Naive thymus-derived CD4-positive, alpha-beta T cell (primary cell): ENCODE measurements at regions of chrX and their contacts with region 1.

Region 1: GRCh38 chrX:103464774-103465117 is 54.5 kb downstream of the RAB40A start:
- DNase-seq: peak; percentile 29 to 82 (median 72)
- ATAC-seq: peak; percentile 98
- H3K4me3 ChIP-seq: peak overlapping the region; percentile 70
- H3K4me3 Mint-ChIP-seq: peak overlapping the region; percentile 92 to 98 (median 94)
- H3K27ac ChIP-seq: peak overlapping the region; percentile 57
- H3K27ac Mint-ChIP-seq: peak overlapping the region; percentile 7 to 95 (median 91)
- H3K4me1 ChIP-seq: peaks cover 0 to 4% of the 10 kb centered on the region in 2 donors
- H3K4me1 Mint-ChIP-seq: peaks cover 5 to 45% (median 23%) of the 10 kb centered on the region in 7 donors
- H3K27me3 ChIP-seq: no peaks in the 10 kb centered on the region
- H3K27me3 Mint-ChIP-seq: peaks cover 0 to 9% (median 0%) of the 10 kb centered on the region in 5 donors

Region 2: DNA sequence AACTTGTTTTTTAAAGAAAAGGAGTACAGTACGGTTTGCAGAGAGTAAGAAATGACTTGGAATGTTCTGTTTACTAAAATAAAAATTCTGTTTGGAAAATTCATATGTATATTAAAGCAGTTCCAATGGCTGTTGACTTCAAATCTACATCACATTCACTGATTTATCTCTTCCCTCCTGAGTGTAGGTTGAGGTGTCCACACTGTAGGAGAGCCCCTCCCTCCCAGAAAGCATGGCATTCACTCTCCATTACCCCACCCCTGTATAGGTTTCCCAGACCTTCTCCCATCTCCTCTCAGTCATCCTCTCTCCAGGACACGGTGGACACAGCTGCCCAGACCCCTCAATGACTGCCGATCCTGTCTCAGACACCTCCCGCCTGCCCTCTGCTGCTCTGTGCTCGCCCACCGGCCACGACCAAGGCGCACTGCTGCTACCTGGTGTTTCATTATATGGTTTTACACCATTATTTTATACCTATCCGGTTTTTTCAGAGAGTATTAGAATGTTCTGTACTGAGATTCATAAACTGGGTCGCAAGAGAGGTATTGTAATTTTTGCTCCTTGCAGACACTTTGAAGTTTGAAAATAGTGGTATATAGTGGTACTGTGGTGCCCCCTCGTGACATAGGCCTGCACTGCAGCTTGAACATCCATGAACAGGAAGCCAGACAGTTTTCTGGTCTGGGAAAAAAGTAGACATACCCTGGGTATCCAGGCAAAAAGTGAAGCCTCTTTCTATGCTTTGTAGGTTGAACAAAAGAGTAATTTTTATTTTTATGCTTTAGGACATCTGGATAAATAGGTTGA is 288.6 kb before region 1 on chrX:
- CTCF ChIA-PET with region 1: interaction called, 3 read pairs
- POLR2A ChIA-PET with region 1: no interaction called
- intact Hi-C with region 1: loop called in 1 of 2 experiments (anchors 1 kb)
- DNase-seq: peak; percentile 16 to 56 (median 43)
- ATAC-seq: peak; percentile 78
- H3K4me3 ChIP-seq: no peak overlapping the region
- H3K4me3 Mint-ChIP-seq: peak overlapping the region; percentile 7 to 71 (median 42)
- H3K27ac ChIP-seq: no peak overlapping the region
- H3K27ac Mint-ChIP-seq: no peak overlapping the region
- H3K4me1 ChIP-seq: no peaks in the 10 kb centered on the region
- H3K4me1 Mint-ChIP-seq: peaks cover 2 to 5% (median 4%) of the 10 kb centered on the region in 7 donors
- H3K27me3 ChIP-seq: no peaks in the 10 kb centered on the region
- H3K27me3 Mint-ChIP-seq: peaks cover 0 to 9% (median 6%) of the 10 kb centered on the region in 5 donors

Region 3: DNA sequence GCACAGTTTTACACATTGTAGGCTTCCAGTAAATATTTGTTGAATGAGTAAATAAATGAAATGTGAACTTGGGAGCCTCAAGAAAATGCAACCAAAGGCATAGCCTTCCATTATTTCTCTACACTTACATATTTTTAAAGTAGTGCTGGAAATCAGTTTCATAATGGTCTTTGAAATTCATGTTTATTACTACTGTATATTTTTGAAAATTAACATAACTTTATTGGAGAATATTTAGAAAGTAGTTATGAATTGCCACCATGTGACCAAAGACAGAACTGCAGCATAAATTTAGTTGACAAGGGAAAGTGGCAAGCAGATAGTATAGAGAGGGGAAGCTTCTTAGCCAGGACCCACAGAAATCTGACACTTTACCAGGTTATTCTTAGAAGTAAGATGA is 216.2 kb before region 1 on chrX:
- CTCF ChIA-PET with region 1: interaction called, 5 read pairs
- POLR2A ChIA-PET with region 1: interaction called, 3 read pairs
- intact Hi-C with region 1: loop called in 1 of 2 experiments (anchors 1 kb)
- DNase-seq: peak in 4 of 9 donors; percentile 8 to 27 (median 14)
- ATAC-seq: no peak
- H3K4me3 ChIP-seq: no peak overlapping the region
- H3K4me3 Mint-ChIP-seq: no peak overlapping the region
- H3K27ac ChIP-seq: no peak overlapping the region
- H3K27ac Mint-ChIP-seq: no peak overlapping the region
- H3K4me1 ChIP-seq: no peaks in the 10 kb centered on the region
- H3K4me1 Mint-ChIP-seq: peaks cover 3 to 16% (median 4%) of the 10 kb centered on the region in 7 donors
- H3K27me3 ChIP-seq: no peaks in the 10 kb centered on the region
- H3K27me3 Mint-ChIP-seq: peaks cover 0 to 12% (median 0%) of the 10 kb centered on the region in 5 donors

Region 4: DNA sequence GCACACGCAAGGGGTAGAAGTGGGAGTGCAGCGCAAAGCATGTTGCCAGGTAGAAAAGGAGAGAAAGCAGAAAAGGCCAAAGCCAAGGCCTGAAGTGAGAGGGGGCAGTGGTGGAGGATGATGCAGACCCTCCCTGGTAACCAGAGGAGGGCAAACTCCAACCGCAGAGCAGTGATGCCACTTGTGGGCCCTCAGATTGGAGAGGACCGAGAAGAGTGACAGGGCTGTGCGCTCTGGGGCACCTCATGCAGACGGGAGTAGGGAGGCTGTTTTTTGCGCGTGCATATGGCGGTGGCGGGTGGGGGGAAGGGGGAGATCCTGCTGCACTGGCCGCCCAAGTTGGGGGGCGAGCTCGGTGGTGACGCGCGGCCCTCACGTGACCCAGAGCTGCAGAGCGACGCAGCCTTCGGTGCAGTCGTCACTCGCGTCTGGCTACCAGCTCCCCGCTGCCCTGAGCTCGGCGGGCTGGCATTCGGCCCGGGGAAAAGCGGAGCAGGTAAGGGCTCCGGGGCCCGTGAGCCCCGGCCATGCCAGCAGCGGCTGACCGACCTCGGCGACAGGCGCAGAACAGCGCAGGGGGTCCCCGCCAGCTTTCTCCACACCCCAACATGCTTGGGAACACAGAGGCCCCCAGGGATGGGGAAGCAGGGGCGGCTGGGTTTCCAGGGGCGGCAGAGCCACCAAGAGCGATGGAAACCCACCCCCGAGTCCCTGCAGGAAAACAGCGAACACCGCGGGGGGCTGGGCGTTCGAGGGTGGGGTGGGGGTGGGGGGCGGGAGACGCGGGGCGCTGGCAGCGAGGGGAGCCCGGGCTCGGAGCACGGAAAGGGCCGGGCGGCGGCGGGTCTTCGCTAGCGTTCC is 88.4 kb before region 1 on chrX and contains the start of gene BEX3:
- CTCF ChIA-PET with region 1: interaction called, 9 read pairs
- POLR2A ChIA-PET with region 1: interaction called, 24 read pairs
- intact Hi-C with region 1: loop called in 1 of 2 experiments (anchors 1 kb)
- DNase-seq: peak in 8 of 9 donors; percentile 21 to 61 (median 50)
- ATAC-seq: peak; percentile 73
- H3K4me3 ChIP-seq: peak within 1 kb of the TSS; percentile 27
- H3K4me3 Mint-ChIP-seq: peak within 1 kb of the TSS; percentile 74 to 91 (median 84)
- H3K27ac ChIP-seq: peak within 1 kb of the TSS; percentile 73
- H3K27ac Mint-ChIP-seq: peak within 1 kb of the TSS in 8 of 9 donors; percentile 64 to 89 (median 76)
- H3K4me1 ChIP-seq: no peaks in the 10 kb centered on the region
- H3K4me1 Mint-ChIP-seq: peaks cover 3 to 14% (median 7%) of the 10 kb centered on the region in 7 donors
- H3K27me3 ChIP-seq: no peaks in the 10 kb centered on the region
- H3K27me3 Mint-ChIP-seq: peaks cover 0 to 4% (median 0%) of the 10 kb centered on the region in 5 donors
- total RNA-seq, gene BEX3: 5.9 to 75.5 (median 28.0) TPM

Region 5: GRCh38 chrX:103488794-103489193 is 24.0 kb after region 1 on chrX:
- CTCF ChIA-PET with region 1: interaction called, 3 read pairs
- POLR2A ChIA-PET with region 1: interaction called, 6 read pairs
- intact Hi-C with region 1: loop called in 1 of 2 experiments (anchors 1 kb)
- DNase-seq: no peak
- ATAC-seq: no peak
- H3K4me3 ChIP-seq: no peak overlapping the region
- H3K4me3 Mint-ChIP-seq: no peak overlapping the region
- H3K27ac ChIP-seq: no peak overlapping the region
- H3K27ac Mint-ChIP-seq: no peak overlapping the region
- H3K4me1 ChIP-seq: no peaks in the 10 kb centered on the region
- H3K4me1 Mint-ChIP-seq: peaks cover 0 to 3% (median 0%) of the 10 kb centered on the region in 7 donors
- H3K27me3 ChIP-seq: no peaks in the 10 kb centered on the region
- H3K27me3 Mint-ChIP-seq: peaks cover 0 to 6% (median 3%) of the 10 kb centered on the region in 5 donors